ENCODE measurements at regions of chr6 and their contacts with region 1.

Region 1: GRCh38 chr6:36546920-36547645 is at the start of gene STK38:
- H3K4me3 Mint-ChIP-seq: peak within 1 kb of the TSS; percentile 95
- H3K27ac Mint-ChIP-seq: peak within 1 kb of the TSS; percentile 95
- H3K4me1 Mint-ChIP-seq: peaks cover 36% of the 10 kb centered on the region
- H3K27me3 Mint-ChIP-seq: no peaks in the 10 kb centered on the region

Region 2: GRCh38 chr6:36594029-36594815 is 47.1 kb after region 1 on chr6 and contains the start of gene SRSF3:
- intact Hi-C with region 1: loop called (anchors 1 kb)
- H3K4me3 Mint-ChIP-seq: peak within 1 kb of the TSS; percentile 84
- H3K27ac Mint-ChIP-seq: peak within 1 kb of the TSS; percentile 96
- H3K4me1 Mint-ChIP-seq: peaks cover 36% of the 10 kb centered on the region
- H3K27me3 Mint-ChIP-seq: no peaks in the 10 kb centered on the region

Measured in dendritic cell treated with granulocyte-macrophage colony-stimulating factor and Interleukin-4, amounts not matched to agents 40 ng/mL and 50 ng/mL, for 4 days (primary cell).